Mammary epithelial cell (primary cell): ENCODE measurements at regions of chr5 and their contacts with region 1.

Region 1: GRCh38 chr5:9544502-9545135 is 1.3 kb downstream of the SEMA5A start:
- DNase-seq: peak; percentile 85
- H3K4me3 ChIP-seq: peak overlapping the region; percentile 55 to 86 (median 78)
- H3K27ac ChIP-seq: peak overlapping the region; percentile 76
- H3K4me1 ChIP-seq: peaks cover 20% of the 10 kb centered on the region
- H3K27me3 ChIP-seq: no peaks in the 10 kb centered on the region
- CTCF ChIP-seq: peak; percentile 77 to 94

Region 2: GRCh38 chr5:8756498-8757084 is 788.0 kb before region 1 on chr5:
- CTCF ChIA-PET with region 1: no interaction called
- dilution Hi-C with region 1: no loop called
- in situ Hi-C with region 1: no loop called
- intact Hi-C with region 1: loop called (anchors 1 kb)
- DNase-seq: peak; percentile 28
- H3K4me3 ChIP-seq: no peak overlapping the region
- H3K27ac ChIP-seq: no peak overlapping the region
- H3K4me1 ChIP-seq: no peaks in the 10 kb centered on the region
- H3K27me3 ChIP-seq: no peaks in the 10 kb centered on the region
- CTCF ChIP-seq: peak; percentile 57 to 80

Region 3: GRCh38 chr5:9156282-9156681 is 388.3 kb before region 1 on chr5:
- CTCF ChIA-PET with region 1: no interaction called
- dilution Hi-C with region 1: no loop called
- in situ Hi-C with region 1: no loop called
- intact Hi-C with region 1: loop called (anchors 1 kb)
- DNase-seq: peak; percentile 46
- H3K4me3 ChIP-seq: no peak overlapping the region
- H3K27ac ChIP-seq: no peak overlapping the region
- H3K4me1 ChIP-seq: no peaks in the 10 kb centered on the region
- H3K27me3 ChIP-seq: no peaks in the 10 kb centered on the region
- CTCF ChIP-seq: peak; percentile 62 to 81

Region 4: DNA sequence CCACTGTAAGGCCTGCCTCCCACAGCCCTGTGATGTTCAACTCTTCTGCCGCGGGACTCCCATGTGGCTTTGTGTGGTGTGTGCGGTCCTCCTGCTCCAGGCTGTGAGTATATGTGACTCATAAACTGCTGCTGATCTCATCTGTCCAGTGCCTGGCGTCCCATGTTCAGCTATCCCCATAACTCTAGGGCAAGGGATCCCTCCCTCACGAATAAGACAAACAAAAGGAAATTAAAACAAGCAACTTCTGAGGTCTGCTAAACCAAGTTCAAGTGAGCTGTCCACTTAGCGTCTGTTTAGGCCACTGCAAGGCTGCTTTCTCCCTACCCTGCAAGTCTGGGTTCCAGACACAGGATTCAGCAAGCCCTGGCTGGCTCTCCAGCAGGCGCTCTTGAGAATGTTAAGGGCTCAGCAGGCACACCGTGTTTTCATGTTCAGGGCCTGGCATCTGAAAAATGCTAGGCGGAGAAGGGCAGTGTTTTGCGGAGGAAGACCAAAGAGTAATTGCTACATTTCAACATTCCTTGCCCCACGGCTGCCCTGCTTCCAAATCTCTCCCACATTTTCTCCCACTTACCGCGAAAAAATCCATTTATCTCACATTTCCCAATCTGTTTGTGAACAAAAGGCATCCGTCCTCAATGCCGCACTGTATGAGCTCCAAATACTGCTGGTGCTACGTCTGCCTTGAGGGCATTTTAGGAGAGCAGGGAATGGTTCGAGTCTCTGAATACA is 279.0 kb before region 1 on chr5:
- CTCF ChIA-PET with region 1: no interaction called
- dilution Hi-C with region 1: no loop called
- in situ Hi-C with region 1: loop called in 1 of 2 experiments (anchors 25 kb)
- intact Hi-C with region 1: loop called (anchors 5 kb)
- DNase-seq: peak; percentile 93
- H3K4me3 ChIP-seq: peak overlapping the region in 1 of 3 experiments; percentile 24
- H3K27ac ChIP-seq: peak overlapping the region; percentile 89
- H3K4me1 ChIP-seq: peaks cover 56% of the 10 kb centered on the region
- H3K27me3 ChIP-seq: no peaks in the 10 kb centered on the region
- CTCF ChIP-seq: no peak

Region 5: GRCh38 chr5:9498541-9499497 is 45.8 kb before region 1 on chr5:
- CTCF ChIA-PET with region 1: no interaction called
- dilution Hi-C with region 1: no loop called
- in situ Hi-C with region 1: no loop called
- intact Hi-C with region 1: loop called (anchors 1 kb)
- DNase-seq: peak; percentile 47
- H3K4me3 ChIP-seq: no peak overlapping the region
- H3K27ac ChIP-seq: no peak overlapping the region
- H3K4me1 ChIP-seq: no peaks in the 10 kb centered on the region
- H3K27me3 ChIP-seq: no peaks in the 10 kb centered on the region
- CTCF ChIP-seq: peak; percentile 52 to 80

Region 6: GRCh38 chr5:10030210-10030831 is 485.7 kb after region 1 on chr5:
- CTCF ChIA-PET with region 1: interaction called, 4 read pairs
- dilution Hi-C with region 1: no loop called
- in situ Hi-C with region 1: no loop called
- intact Hi-C with region 1: loop called (anchors 2 kb)
- DNase-seq: peak; percentile 30
- H3K4me3 ChIP-seq: no peak overlapping the region
- H3K27ac ChIP-seq: no peak overlapping the region
- H3K4me1 ChIP-seq: no peaks in the 10 kb centered on the region
- H3K27me3 ChIP-seq: no peaks in the 10 kb centered on the region
- CTCF ChIP-seq: peak; percentile 30 to 62